IMR-90 (cell line): ENCODE measurements at regions of chr1 and their contacts with region 1.

Region 1: DNA sequence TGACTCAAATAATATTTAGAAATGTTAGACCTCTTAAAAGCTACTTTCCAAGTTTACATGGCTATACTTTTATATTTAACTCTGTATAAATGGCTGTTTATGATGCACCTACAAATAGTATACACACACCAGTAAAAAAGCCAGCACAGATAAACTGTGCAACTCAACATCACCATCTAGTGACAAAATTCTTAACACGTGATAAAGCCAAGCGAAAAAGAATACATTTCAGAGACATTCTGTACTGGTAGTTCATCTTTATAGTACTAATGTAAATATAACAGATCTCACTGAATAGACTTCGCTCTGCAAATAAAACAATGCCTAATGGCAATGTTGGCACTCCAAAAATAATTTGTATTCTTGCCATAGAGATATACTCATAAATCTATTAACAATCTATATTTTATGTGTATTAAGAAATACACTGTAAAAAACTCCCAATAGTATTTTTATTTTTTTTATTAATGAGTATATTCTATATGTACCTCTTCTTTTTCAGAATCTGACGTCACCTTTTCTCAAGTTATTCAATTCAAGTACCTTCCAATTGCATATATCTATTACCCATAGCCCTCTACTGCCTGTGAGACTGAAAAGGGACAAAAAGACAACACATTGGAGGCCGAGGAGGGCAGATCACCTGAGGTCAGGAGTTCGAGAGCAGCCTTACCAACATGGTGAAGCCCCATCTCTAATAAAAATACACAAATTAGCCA is 100.2 kb downstream of the DPYD start:
- DNase-seq: peak; percentile 58
- ATAC-seq: peak; percentile 82
- H3K4me3 ChIP-seq: no peak overlapping the region
- H3K27ac ChIP-seq: no peak overlapping the region
- H3K4me1 ChIP-seq: no peaks in the 10 kb centered on the region
- H3K27me3 ChIP-seq: no peaks in the 10 kb centered on the region
- CTCF ChIP-seq: peak; percentile 66
- POLR2A ChIP-seq: no peak
- RAD21 ChIP-seq: peak; percentile 78

Region 2: GRCh38 chr1:97137862-97138514 is 682.6 kb before region 1 on chr1:
- CTCF ChIA-PET with region 1: no interaction called
- POLR2A ChIA-PET with region 1: no interaction called
- dilution Hi-C with region 1: no loop called
- in situ Hi-C with region 1: no loop called
- intact Hi-C with region 1: loop called (anchors 1 kb)
- DNase-seq: peak; percentile 78
- ATAC-seq: peak; percentile 96
- H3K4me3 ChIP-seq: no peak overlapping the region
- H3K27ac ChIP-seq: no peak overlapping the region
- H3K4me1 ChIP-seq: peaks cover 3% of the 10 kb centered on the region
- H3K27me3 ChIP-seq: no peaks in the 10 kb centered on the region
- CTCF ChIP-seq: peak; percentile 69
- POLR2A ChIP-seq: no peak
- RAD21 ChIP-seq: peak; percentile 65

Region 3: GRCh38 chr1:97243973-97244560 is 576.6 kb before region 1 on chr1:
- CTCF ChIA-PET with region 1: no interaction called
- POLR2A ChIA-PET with region 1: no interaction called
- dilution Hi-C with region 1: no loop called
- in situ Hi-C with region 1: loop called (anchors 25 kb)
- intact Hi-C with region 1: loop called (anchors 5 kb)
- DNase-seq: peak; percentile 29
- ATAC-seq: 0 out of 2 replicates have a peak, but pooled peaks have one; percentile 51
- H3K4me3 ChIP-seq: no peak overlapping the region
- H3K27ac ChIP-seq: no peak overlapping the region
- H3K4me1 ChIP-seq: no peaks in the 10 kb centered on the region
- H3K27me3 ChIP-seq: no peaks in the 10 kb centered on the region
- CTCF ChIP-seq: peak; percentile 55
- POLR2A ChIP-seq: no peak
- RAD21 ChIP-seq: peak; percentile 63